Endothelial cell of umbilical vein (primary cell): ENCODE measurements at regions of chr7 and their contacts with region 1.

Region 1: DNA sequence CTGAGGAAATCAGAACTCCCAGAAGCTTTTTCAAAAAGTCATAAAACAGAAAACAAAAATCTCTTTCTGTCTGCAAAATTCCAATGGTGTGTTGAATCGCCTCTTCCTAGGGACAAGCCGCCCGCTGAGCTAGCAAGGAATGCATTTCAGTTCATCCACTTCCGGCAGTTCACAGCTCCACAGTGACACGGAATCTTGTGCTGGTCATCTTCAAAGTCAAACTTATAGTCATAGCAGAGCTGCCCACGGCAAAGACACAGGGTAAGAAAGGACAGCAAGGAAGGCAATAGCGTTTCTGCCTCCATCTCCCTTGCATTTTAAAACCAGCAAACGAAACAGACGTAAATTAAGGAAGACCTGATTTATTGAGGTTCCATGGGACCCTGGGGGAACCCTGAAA is 111.2 kb downstream of the GALNT11 start:
- DNase-seq: no peak
- H3K4me3 ChIP-seq: no peak overlapping the region
- H3K27ac ChIP-seq: no peak overlapping the region
- H3K4me1 ChIP-seq: peaks cover 12% of the 10 kb centered on the region
- H3K27me3 ChIP-seq: no peaks in the 10 kb centered on the region
- CTCF ChIP-seq: no peak
- POLR2A ChIP-seq: no peak

Region 2: DNA sequence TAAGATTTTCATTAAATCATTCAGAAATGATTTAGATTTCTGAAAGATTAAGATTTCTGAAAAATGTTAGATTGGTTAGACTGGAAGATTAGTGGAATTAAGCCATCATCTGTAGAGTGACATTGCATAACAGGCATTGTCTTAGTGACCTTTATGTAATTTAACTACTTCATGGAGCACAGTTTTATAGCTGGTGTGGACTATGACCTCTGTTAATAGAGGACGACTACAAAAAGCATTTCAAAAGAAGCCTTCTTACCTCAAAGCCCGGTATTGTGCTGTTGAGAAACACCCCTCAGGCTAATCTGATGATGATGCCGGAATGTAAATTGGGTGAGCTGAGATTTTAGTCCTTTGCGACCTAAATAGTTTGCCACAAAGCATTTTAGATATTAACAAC is 55.6 kb before region 1 on chr7:
- CTCF ChIA-PET with region 1: interaction called, 3 read pairs
- POLR2A ChIA-PET with region 1: no interaction called
- dilution Hi-C with region 1: no loop called
- intact Hi-C with region 1: loop called (anchors 5 kb)
- DNase-seq: no peak
- H3K4me3 ChIP-seq: no peak overlapping the region
- H3K27ac ChIP-seq: no peak overlapping the region
- H3K4me1 ChIP-seq: no peaks in the 10 kb centered on the region
- H3K27me3 ChIP-seq: no peaks in the 10 kb centered on the region
- CTCF ChIP-seq: no peak
- POLR2A ChIP-seq: no peak